ENCODE measurements at regions of chr1 and their contacts with region 1.

Region 1: DNA sequence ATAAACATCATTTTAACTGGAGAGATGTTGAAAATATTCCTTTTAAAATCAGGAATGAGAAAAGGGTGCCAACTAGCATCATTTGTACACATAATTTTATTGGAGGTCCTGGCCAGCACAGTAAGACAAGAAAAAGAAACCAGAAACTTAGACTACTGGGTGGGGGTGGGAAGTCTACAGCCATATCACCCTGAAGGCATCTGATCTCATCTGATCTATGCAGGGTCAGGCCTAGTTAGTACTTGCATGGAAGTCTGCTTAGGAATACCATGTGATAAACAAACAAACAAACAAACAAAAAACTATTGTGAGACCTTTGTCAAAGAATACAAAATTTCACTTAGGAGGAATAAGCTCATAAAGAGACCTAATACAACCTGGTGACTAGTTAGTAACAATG is 54.2 kb downstream of the EIF2B3 start:
- DNase-seq: no peak
- ATAC-seq: no peak
- H3K4me3 ChIP-seq: no peak overlapping the region
- H3K27ac ChIP-seq: no peak overlapping the region
- H3K4me1 ChIP-seq: peaks cover 1% of the 10 kb centered on the region; the same call in 1 of the 2 replicates
- H3K27me3 ChIP-seq: no peaks in the 10 kb centered on the region
- CTCF ChIP-seq: no peak
- POLR2A ChIP-seq: no peak
- RAD21 ChIP-seq: no peak

Region 2: GRCh38 chr1:44976252-44976651 is 44.1 kb after region 1 on chr1:
- CTCF ChIA-PET with region 1: no interaction called
- POLR2A ChIA-PET with region 1: no interaction called
- dilution Hi-C with region 1: no loop called
- in situ Hi-C with region 1: no loop called
- intact Hi-C with region 1: loop called (anchors 2 kb)
- DNase-seq: no peak
- ATAC-seq: no peak
- H3K4me3 ChIP-seq: no peak overlapping the region
- H3K27ac ChIP-seq: no peak overlapping the region
- H3K4me1 ChIP-seq: no peaks in the 10 kb centered on the region
- H3K27me3 ChIP-seq: no peaks in the 10 kb centered on the region
- CTCF ChIP-seq: no peak
- POLR2A ChIP-seq: no peak
- RAD21 ChIP-seq: no peak

Measured in IMR-90 (cell line).